AG04450 (cell line): ENCODE measurements at regions of chr1 and their contacts with region 1.

Region 1: GRCh38 chr1:67214420-67215174 is 48.3 kb downstream of the IL23R start:
- DNase-seq: no peak
- H3K4me3 ChIP-seq: no peak overlapping the region
- H3K27ac ChIP-seq: no peak overlapping the region
- H3K27me3 ChIP-seq: peaks cover 6% of the 10 kb centered on the region
- CTCF ChIP-seq: peak; percentile 73

Region 2: GRCh38 chr1:67162957-67163356 is 51.6 kb before region 1 on chr1:
- CTCF ChIA-PET with region 1: interaction called, 24 read pairs
- POLR2A ChIA-PET with region 1: no interaction called
- DNase-seq: no peak
- H3K4me3 ChIP-seq: no peak overlapping the region
- H3K27ac ChIP-seq: no peak overlapping the region
- H3K27me3 ChIP-seq: peaks cover 2% of the 10 kb centered on the region
- CTCF ChIP-seq: no peak

Region 3: GRCh38 chr1:67201891-67202290 is 12.7 kb before region 1 on chr1:
- CTCF ChIA-PET with region 1: interaction called, 10 read pairs
- POLR2A ChIA-PET with region 1: no interaction called
- DNase-seq: no peak
- H3K4me3 ChIP-seq: no peak overlapping the region
- H3K27ac ChIP-seq: no peak overlapping the region
- H3K27me3 ChIP-seq: peaks cover 4% of the 10 kb centered on the region
- CTCF ChIP-seq: no peak

Region 4: GRCh38 chr1:67230539-67230938 is 15.9 kb after region 1 on chr1:
- CTCF ChIA-PET with region 1: interaction called, 10 read pairs
- POLR2A ChIA-PET with region 1: no interaction called
- DNase-seq: no peak
- H3K4me3 ChIP-seq: no peak overlapping the region
- H3K27ac ChIP-seq: no peak overlapping the region
- H3K27me3 ChIP-seq: peaks cover 6% of the 10 kb centered on the region
- CTCF ChIP-seq: no peak

Region 5: DNA sequence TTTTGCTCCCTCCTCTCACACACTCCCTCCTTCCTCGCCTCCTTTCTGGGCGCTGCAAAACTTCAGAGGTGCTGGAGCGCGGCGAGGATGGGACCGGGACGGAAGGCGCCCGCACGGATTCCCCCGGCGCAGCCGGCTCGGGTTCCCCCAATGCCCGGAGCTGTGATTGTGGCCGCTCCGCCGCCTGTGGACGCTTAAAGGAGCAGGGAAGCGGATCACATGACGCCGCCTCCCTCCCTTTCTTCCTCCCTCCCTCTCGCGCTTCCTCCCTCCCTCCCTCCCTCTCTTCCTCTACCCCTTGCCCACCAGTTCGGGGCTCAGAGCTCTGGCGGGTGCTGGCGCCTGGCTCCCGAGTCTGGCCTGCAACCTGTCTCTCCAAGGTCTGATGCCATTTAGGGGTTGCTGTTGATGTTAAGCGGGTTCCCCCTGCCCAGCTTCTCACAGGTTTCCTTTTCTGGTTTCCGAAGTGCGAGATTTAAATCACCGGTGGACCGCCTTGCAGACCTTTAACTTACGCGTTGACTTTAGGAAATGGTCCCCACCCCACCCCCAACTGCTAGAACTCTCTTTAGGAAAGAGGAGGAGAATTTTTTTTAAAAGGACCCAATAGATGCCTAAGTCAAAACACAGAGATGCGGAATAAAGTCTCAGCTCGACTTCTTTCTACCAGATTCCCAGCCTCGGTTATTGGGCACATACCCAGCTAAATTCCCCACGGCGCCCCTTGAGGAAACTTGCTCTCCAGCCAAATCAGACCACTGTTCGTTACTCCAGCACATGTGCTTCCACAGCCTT is 1018.0 kb after region 1 on chr1 and contains the start of gene WLS:
- CTCF ChIA-PET with region 1: no interaction called
- POLR2A ChIA-PET with region 1: no interaction called
- DNase-seq: peak; percentile 60
- H3K4me3 ChIP-seq: peak within 1 kb of the TSS; percentile 76
- H3K27ac ChIP-seq: peak within 1 kb of the TSS; percentile 73
- H3K27me3 ChIP-seq: no peaks in the 10 kb centered on the region
- CTCF ChIP-seq: peak; percentile 27; the same call in 1 of the 2 replicates
- polyA plus RNA-seq, gene WLS: 391 and 417 TPM in 2 replicates